ENCODE measurements at regions of chr22 and their contacts with region 1.

Region 1: DNA sequence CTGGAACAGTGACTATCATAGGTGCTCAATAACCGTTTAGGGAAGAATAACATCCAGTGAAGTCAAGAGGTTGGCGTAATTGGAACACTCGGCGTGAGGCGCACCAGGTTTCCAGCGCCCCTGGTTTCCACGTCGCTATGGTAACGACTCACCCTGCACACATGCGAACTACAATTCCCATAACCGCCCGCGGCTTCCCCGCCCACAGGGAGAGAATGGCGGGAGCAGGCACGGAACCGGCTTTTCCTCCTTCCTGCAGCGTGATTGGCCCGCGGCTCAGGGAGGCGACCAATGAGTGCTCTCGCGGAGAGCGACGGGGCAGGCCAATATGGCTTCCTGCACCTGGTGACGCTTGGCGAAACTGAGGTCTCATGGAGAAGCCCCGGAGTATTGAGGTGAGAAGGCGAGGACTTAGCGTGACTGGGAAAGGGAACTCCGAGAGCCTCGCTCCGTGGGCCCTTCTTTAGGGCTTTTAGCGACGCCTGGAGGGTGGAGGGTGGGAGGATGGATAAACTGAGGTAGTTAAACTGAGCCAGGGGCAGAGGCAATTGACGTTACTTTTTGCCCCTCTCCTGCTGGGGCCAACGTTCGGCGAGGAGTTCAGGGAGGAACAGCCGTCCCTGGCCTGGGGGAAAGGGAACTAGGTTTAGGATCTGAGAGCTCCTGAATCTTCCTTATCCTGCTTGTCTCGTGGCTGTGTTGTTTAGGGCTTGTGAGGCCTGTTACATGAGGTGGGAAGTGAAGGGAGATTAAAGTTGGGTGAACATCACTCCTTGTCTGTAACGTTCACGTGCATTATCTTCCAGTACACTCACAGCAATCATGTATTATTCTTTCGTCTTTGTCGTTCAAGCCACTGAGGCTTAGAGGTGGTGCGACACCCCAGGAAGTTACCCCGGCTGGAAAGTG is at the start of gene L3MBTL2:
- DNase-seq: peak; percentile 70
- ATAC-seq: peak; percentile 100
- H3K4me3 ChIP-seq: peak within 1 kb of the TSS; percentile 75 to 92
- H3K27ac ChIP-seq: peak within 1 kb of the TSS; percentile 96
- H3K4me1 ChIP-seq: no peaks in the 10 kb centered on the region
- H3K27me3 ChIP-seq: no peaks in the 10 kb centered on the region
- CTCF ChIP-seq: no peak
- total RNA-seq, gene L3MBTL2: 26.6 TPM

Region 2: GRCh38 chr22:41274856-41275255 is 69.6 kb after region 1 on chr22:
- CTCF ChIA-PET with region 1: no interaction called
- POLR2A ChIA-PET with region 1: interaction called, 12 read pairs
- in situ Hi-C with region 1: no loop called
- intact Hi-C with region 1: no loop called
- DNase-seq: no peak
- ATAC-seq: no peak; the same call in 1 of the 2 replicates
- H3K4me3 ChIP-seq: no peak overlapping the region
- H3K27ac ChIP-seq: no peak overlapping the region
- H3K4me1 ChIP-seq: no peaks in the 10 kb centered on the region
- H3K27me3 ChIP-seq: no peaks in the 10 kb centered on the region
- CTCF ChIP-seq: no peak